T-cell (primary cell): ENCODE measurements at regions of chr6 and their contacts with region 1.

Region 1: GRCh38 chr6:20319520-20320357 is 81.9 kb upstream of the E2F3 start:
- DNase-seq: peak; percentile 53 to 91 (median 82)
- ATAC-seq: peak; percentile 89 to 96 (median 95)
- H3K4me3 ChIP-seq: peak overlapping the region; percentile 62 to 82
- H3K4me3 Mint-ChIP-seq: peak overlapping the region; percentile 79 to 88 (median 87)
- H3K27ac ChIP-seq: peak overlapping the region; percentile 96
- H3K27ac Mint-ChIP-seq: peak overlapping the region; percentile 93 to 97
- H3K4me1 ChIP-seq: peaks cover 2 to 15% of the 10 kb centered on the region in 2 experiments
- H3K4me1 Mint-ChIP-seq: peaks cover 18 to 28% (median 24%) of the 10 kb centered on the region in 3 donors
- H3K27me3 ChIP-seq: no peaks in the 10 kb centered on the region
- H3K27me3 Mint-ChIP-seq: no peaks in the 10 kb centered on the region

Region 2: GRCh38 chr6:20335872-20336271 is 16.1 kb after region 1 on chr6:
- CTCF ChIA-PET with region 1: interaction called in 1 of 2 experiments, 3 read pairs
- POLR2A ChIA-PET with region 1: interaction called, 5 to 16 read pairs
- DNase-seq: peak in 1 of 35 experiments; percentile 32
- ATAC-seq: peak; percentile 59 to 83 (median 71)
- H3K4me3 ChIP-seq: peak overlapping the region in 1 of 2 donors; percentile 38
- H3K4me3 Mint-ChIP-seq: peak overlapping the region; percentile 47 to 76 (median 68)
- H3K27ac ChIP-seq: peak overlapping the region; percentile 58
- H3K27ac Mint-ChIP-seq: peak overlapping the region; percentile 71 to 89
- H3K4me1 ChIP-seq: peaks cover 0 to 9% of the 10 kb centered on the region in 2 experiments
- H3K4me1 Mint-ChIP-seq: peaks cover 23 to 32% (median 29%) of the 10 kb centered on the region in 3 donors
- H3K27me3 ChIP-seq: no peaks in the 10 kb centered on the region
- H3K27me3 Mint-ChIP-seq: no peaks in the 10 kb centered on the region

Region 3: GRCh38 chr6:20366091-20366832 is 46.5 kb after region 1 on chr6:
- CTCF ChIA-PET with region 1: interaction called, 3 to 14 read pairs
- POLR2A ChIA-PET with region 1: interaction called, 11 to 24 read pairs
- DNase-seq: peak; percentile 24 to 81 (median 49)
- ATAC-seq: peak; percentile 86 to 94 (median 92)
- H3K4me3 ChIP-seq: peak overlapping the region; percentile 3 to 23
- H3K4me3 Mint-ChIP-seq: peak overlapping the region; percentile 73 to 81 (median 75)
- H3K27ac ChIP-seq: peak overlapping the region; percentile 84
- H3K27ac Mint-ChIP-seq: peak overlapping the region; percentile 99 to 100
- H3K4me1 ChIP-seq: peaks cover 42 to 58% of the 10 kb centered on the region in 2 experiments
- H3K4me1 Mint-ChIP-seq: peaks cover 63 to 71% (median 63%) of the 10 kb centered on the region in 3 donors
- H3K27me3 ChIP-seq: no peaks in the 10 kb centered on the region
- H3K27me3 Mint-ChIP-seq: no peaks in the 10 kb centered on the region

Region 4: DNA sequence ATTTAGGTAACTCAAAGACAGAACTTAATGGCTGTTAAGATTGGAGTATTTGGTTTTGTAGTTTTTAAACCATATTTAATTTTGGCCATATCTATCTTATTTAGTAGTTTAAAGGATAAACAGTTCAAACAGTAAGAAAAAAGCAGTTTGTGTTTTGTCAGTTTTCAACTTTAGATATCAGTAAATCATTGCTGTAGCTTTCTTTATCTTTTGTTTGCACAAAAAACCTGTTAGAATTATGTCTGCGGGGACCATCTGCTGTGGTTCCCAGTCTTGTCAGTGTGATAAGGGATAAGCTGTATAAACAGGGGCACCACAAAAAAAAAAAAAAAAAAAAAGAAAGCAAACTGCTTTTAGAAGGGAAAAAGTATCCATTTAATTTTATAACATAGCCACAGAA is 255.4 kb after region 1 on chr6:
- CTCF ChIA-PET with region 1: interaction called in 1 of 2 experiments, 15 read pairs
- POLR2A ChIA-PET with region 1: no interaction called
- DNase-seq: no peak
- ATAC-seq: no peak
- H3K4me3 ChIP-seq: no peak overlapping the region
- H3K4me3 Mint-ChIP-seq: no peak overlapping the region
- H3K27ac ChIP-seq: no peak overlapping the region
- H3K27ac Mint-ChIP-seq: no peak overlapping the region
- H3K4me1 ChIP-seq: peaks cover 0 to 5% of the 10 kb centered on the region in 2 experiments
- H3K4me1 Mint-ChIP-seq: peaks cover 11 to 16% (median 13%) of the 10 kb centered on the region in 3 donors
- H3K27me3 ChIP-seq: no peaks in the 10 kb centered on the region
- H3K27me3 Mint-ChIP-seq: no peaks in the 10 kb centered on the region